ENCODE measurements at regions of chr17 and their contacts with region 1.

Region 1: DNA sequence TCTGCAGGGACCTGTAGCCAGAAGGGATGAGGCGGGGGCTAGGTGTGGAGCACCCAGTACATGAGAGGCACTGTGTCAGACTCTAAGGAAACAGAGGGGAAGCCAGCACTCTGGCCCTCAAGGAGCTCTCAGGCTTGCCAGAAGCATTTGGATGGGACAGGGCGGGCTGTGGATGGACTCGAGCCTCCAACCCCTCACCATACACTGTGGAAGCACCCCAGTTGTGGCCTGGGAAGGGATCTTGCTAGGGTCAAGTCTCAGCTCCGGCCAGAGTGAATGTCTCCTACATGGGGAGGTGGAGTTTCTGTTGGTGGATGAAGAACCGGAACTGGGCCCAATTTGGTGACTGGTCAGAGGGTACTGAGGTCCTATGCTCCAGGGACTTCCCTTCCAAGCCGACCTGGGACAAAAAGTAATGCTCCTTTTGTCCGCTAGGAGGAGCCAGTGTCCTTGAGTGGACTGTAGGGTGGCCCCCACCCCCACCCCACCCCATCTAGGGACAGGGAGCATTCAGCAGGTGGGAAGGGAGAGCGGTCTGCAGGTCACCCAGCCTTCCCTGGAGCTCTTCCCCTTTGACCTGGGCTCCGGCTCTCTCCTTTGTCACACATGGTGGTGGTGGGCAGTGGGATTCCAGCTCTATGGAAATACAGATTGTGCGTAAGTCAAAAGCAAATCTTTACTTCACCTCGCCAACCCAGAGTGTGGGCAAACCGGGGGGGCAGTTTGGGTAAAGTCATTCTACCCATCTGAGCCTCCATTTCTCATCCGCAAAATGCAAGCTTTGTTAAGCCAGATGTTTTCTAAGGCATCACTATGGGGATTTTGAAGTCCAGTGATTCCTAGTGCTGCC is 20.4 kb upstream of the PHB1 start:
- DNase-seq: peak; percentile 39
- H3K4me3 ChIP-seq: no peak overlapping the region
- H3K27ac ChIP-seq: no peak overlapping the region
- H3K4me1 ChIP-seq: no peaks in the 10 kb centered on the region
- H3K27me3 ChIP-seq: no peaks in the 10 kb centered on the region
- CTCF ChIP-seq: peak; percentile 63 to 87

Region 2: DNA sequence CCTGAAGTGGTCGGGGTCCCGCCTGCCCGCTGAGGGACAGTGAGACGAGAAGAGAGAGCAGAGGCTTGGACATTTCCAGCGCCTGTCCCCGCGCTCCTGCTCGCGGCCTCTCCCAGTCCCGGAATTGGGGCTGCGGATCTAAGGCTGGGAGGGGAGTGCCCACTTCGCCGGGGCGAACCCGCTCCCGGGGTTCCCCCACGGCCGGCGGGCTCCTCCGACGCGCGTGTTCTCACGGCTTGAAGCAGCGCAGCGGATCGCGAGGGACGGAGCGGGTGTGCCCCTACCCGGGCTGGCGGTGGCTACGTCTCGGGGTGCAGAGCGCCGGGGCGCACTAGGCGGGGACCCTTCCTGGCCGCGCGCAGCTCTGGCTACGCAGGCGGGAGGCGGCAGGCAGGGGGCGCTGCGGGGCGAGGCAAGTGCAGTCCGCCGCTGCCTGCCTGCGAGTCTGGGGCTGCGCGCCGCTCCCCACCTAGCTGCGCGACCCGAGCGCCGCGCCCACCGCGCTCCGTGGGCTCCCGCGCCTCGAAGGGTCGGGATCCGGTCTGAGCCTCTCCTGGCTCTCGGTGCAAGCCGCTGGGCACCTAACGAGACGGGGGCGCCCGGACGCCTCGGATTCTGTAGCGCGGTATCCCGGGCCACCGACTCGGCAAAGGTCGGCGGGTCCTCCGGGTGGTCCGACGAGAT is 61.3 kb after region 1 on chr17:
- CTCF ChIA-PET with region 1: no interaction called
- dilution Hi-C with region 1: loop called (anchors 5 kb)
- in situ Hi-C with region 1: loop called in 1 of 2 experiments (anchors 10 kb)
- intact Hi-C with region 1: loop called (anchors 1 kb)
- DNase-seq: peak; percentile 59
- H3K4me3 ChIP-seq: peak overlapping the region; percentile 60 to 79 (median 63)
- H3K27ac ChIP-seq: no peak overlapping the region
- H3K4me1 ChIP-seq: peaks cover 24% of the 10 kb centered on the region
- H3K27me3 ChIP-seq: no peaks in the 10 kb centered on the region
- CTCF ChIP-seq: peak; percentile 52 to 73

Region 3: GRCh38 chr17:49501504-49501903 is 66.5 kb after region 1 on chr17:
- CTCF ChIA-PET with region 1: no interaction called
- dilution Hi-C with region 1: loop called (anchors 5 kb)
- in situ Hi-C with region 1: loop called in 1 of 2 experiments (anchors 10 kb)
- intact Hi-C with region 1: no loop called
- DNase-seq: peak; percentile 65
- H3K4me3 ChIP-seq: no peak overlapping the region
- H3K27ac ChIP-seq: no peak overlapping the region
- H3K4me1 ChIP-seq: peaks cover 36% of the 10 kb centered on the region
- H3K27me3 ChIP-seq: no peaks in the 10 kb centered on the region
- CTCF ChIP-seq: no peak

Region 4: GRCh38 chr17:49527927-49528651 is 93.0 kb after region 1 on chr17:
- CTCF ChIA-PET with region 1: no interaction called
- dilution Hi-C with region 1: no loop called
- in situ Hi-C with region 1: no loop called
- intact Hi-C with region 1: no loop called
- DNase-seq: no peak
- H3K4me3 ChIP-seq: no peak overlapping the region
- H3K27ac ChIP-seq: no peak overlapping the region
- H3K4me1 ChIP-seq: peaks cover 14% of the 10 kb centered on the region
- H3K27me3 ChIP-seq: no peaks in the 10 kb centered on the region
- CTCF ChIP-seq: no peak

Region 5: DNA sequence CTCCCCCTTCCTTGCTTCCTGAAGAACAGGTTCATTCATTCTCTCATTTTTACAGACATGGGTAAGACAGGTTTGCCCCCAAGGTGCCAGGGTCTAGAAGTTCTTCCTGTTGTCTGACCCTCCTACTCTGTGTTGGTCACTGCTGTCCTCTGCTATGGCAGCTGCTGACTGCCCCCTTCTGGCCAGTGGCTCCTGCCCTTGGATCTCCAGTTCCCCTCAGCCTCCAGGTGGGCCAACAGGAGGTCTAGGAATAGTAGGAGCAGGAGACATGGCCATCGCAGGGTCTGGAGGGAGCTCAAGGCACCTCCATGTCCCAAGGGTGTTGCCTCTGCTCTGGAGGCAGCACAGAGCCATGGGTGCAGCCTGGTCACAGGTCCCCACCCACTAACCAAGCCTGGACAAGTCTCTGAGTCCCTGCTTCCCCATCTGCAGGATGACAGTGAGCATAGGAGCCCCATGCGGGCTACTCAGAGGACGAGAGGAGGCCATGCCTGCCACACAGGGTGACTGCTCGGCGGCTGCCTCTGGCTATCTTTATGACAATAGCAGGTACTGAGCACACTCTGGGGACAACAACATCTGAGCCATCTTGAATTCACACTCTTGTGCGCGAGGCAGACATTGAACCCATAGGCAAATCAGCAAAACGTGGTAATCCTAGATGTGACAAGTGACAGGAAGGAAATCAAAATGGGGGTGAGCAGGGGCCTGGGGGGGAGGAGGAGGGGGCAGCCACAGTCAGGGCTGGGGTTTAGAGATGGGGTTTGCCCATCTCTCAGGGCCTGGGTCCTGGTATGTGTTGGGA is 113.7 kb after region 1 on chr17:
- CTCF ChIA-PET with region 1: no interaction called
- dilution Hi-C with region 1: no loop called
- in situ Hi-C with region 1: loop called (anchors 5 kb)
- intact Hi-C with region 1: loop called (anchors 1 kb)
- DNase-seq: peak; percentile 51
- H3K4me3 ChIP-seq: no peak overlapping the region
- H3K27ac ChIP-seq: no peak overlapping the region
- H3K4me1 ChIP-seq: peaks cover 19% of the 10 kb centered on the region
- H3K27me3 ChIP-seq: no peaks in the 10 kb centered on the region
- CTCF ChIP-seq: peak; percentile 77

Region 6: GRCh38 chr17:49556223-49556971 is 121.4 kb after region 1 on chr17:
- CTCF ChIA-PET with region 1: interaction called, 14 read pairs
- dilution Hi-C with region 1: no loop called
- in situ Hi-C with region 1: loop called in 1 of 2 experiments (anchors 5 kb)
- intact Hi-C with region 1: loop called (anchors 1 kb)
- DNase-seq: peak; percentile 44
- H3K4me3 ChIP-seq: no peak overlapping the region
- H3K27ac ChIP-seq: no peak overlapping the region
- H3K4me1 ChIP-seq: peaks cover 18% of the 10 kb centered on the region
- H3K27me3 ChIP-seq: no peaks in the 10 kb centered on the region
- CTCF ChIP-seq: peak; percentile 91 to 99

Region 7: DNA sequence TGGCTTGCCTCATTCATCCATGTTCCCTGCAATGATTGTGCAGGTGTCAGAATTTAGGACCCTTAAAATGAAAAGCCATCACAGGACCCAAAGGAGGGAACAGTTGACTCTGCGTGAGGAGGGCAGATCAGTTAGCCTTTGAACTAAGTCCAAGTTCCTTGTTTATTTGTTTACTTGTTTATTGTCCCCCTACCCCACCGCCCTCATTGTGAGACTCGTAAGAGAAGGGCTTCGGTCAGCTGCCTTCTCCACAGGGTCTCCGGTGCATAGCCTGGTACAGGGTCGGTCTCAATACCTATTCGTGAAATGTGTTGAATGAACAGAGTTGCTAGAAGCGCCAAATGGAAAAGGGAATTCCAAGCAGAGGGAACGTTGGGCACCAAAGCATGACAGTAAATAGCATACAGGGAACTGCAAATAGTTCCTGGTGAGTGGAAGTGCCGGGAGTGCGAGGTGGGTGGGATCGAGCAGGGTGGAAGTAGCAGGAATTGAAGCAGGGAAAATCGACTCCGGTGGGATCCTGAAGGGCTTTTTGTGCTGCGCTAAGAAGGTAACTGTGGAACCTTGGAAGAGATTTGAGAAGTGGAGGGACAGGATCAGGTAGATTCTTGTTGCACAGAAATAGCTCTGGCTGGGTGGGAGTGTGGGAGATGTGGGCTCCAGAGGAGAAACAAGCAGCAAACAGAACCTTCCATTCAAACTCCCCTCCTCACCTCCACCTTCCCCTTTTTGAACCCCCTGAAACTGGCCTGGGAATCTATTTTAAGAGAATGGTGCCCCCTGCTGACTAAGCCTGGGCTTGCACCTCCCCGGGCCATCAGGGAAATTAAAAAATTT is 260.0 kb after region 1 on chr17:
- CTCF ChIA-PET with region 1: no interaction called
- dilution Hi-C with region 1: no loop called
- in situ Hi-C with region 1: loop called in 1 of 2 experiments (anchors 10 kb)
- intact Hi-C with region 1: loop called (anchors 5 kb)
- DNase-seq: no peak
- H3K4me3 ChIP-seq: no peak overlapping the region
- H3K27ac ChIP-seq: no peak overlapping the region
- H3K4me1 ChIP-seq: no peaks in the 10 kb centered on the region
- H3K27me3 ChIP-seq: no peaks in the 10 kb centered on the region
- CTCF ChIP-seq: peak; percentile 85 to 92

Measured in mammary epithelial cell (primary cell).